IMR-90 (cell line): ENCODE measurements at regions of chr16 and their contacts with region 1.

Region 1: GRCh38 chr16:28277537-28278388 is 14.6 kb upstream of the SBK1 start:
- DNase-seq: peak; percentile 63
- ATAC-seq: peak; percentile 97
- H3K4me3 ChIP-seq: peak overlapping the region; percentile 50
- H3K27ac ChIP-seq: no peak overlapping the region; the same call in 1 of the 2 replicates
- H3K4me1 ChIP-seq: no peaks in the 10 kb centered on the region
- H3K27me3 ChIP-seq: peaks cover 26% of the 10 kb centered on the region; the same call in 1 of the 2 replicates
- CTCF ChIP-seq: peak; percentile 94
- POLR2A ChIP-seq: 0 out of 2 replicates have a peak, but pooled peaks have one; percentile 26
- RAD21 ChIP-seq: peak; percentile 94

Region 2: DNA sequence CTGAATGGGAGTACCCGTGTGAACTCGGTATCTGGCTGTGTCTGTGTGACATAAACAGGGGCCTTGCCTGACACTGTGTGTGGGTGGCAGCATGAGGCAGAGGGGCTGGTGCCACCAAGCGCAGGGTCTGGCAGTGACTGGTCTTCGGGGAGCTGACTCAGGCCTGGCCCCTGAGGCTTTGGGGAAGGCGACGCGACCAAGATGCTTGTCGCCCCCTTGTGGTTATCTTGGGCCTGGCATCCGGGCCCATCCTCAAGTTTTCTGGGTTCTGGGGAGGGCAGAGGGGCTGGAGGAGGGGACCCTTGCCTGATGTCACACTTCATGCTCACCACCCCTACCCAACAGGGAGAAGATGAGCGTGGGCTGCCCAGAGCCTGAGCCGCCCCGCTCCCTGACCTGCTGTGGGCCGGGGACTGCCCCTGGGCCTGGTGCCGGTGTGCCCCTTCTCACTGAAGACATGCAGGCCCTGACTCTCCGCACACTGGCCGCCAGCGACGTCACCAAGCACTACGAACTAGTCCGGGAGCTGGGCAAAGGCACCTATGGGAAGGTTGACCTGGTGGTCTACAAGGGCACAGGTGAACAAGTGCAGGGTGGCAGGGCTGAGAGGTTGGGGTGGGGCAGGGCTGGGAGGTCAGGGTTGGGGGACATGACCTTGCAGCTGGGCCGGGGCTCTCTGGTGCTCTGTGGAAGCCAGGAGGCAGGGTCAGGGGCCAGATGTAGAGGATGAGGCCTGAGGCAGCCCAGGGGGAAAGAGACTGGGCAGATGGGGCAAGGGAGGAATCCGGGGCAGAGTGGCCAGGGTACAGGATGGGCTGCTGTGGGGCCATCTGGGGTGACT is 39.5 kb after region 1 on chr16:
- CTCF ChIA-PET with region 1: interaction called, 7 read pairs
- POLR2A ChIA-PET with region 1: interaction called, 8 read pairs
- dilution Hi-C with region 1: no loop called
- in situ Hi-C with region 1: loop called (anchors 5 kb)
- intact Hi-C with region 1: loop called (anchors 1 kb)
- DNase-seq: peak; percentile 34
- ATAC-seq: peak; percentile 82
- H3K4me3 ChIP-seq: no peak overlapping the region
- H3K27ac ChIP-seq: no peak overlapping the region
- H3K4me1 ChIP-seq: no peaks in the 10 kb centered on the region
- H3K27me3 ChIP-seq: peaks cover 2% of the 10 kb centered on the region; the same call in 1 of the 2 replicates
- CTCF ChIP-seq: peak; percentile 81
- POLR2A ChIP-seq: no peak
- RAD21 ChIP-seq: peak; percentile 70

Region 3: DNA sequence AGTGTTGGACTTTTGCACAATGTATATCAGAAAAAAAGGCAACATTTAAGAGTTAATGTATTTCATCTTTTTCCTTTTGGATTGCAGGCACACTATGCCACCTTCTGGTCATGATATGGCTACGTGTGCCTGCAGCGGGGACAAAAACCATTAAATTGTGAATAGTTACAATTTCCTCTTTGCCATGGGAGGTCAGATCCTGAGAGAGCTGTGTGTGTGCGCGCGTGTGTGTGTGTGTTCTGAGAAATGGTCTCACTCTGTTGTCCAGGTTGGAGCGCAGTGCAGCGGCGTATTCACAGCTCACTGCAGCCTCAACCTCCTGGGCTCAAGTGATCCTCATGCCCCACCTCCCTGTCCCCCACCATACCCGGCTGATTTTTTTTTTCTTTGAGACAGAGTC is 271.6 kb after region 1 on chr16:
- CTCF ChIA-PET with region 1: interaction called, 3 read pairs
- POLR2A ChIA-PET with region 1: no interaction called
- dilution Hi-C with region 1: no loop called
- in situ Hi-C with region 1: no loop called
- intact Hi-C with region 1: loop called (anchors 2 kb)
- DNase-seq: peak; percentile 53
- ATAC-seq: peak; percentile 15; the same call in 1 of the 2 replicates
- H3K4me3 ChIP-seq: no peak overlapping the region
- H3K27ac ChIP-seq: no peak overlapping the region
- H3K4me1 ChIP-seq: 0 out of 2 replicates have a peak, but pooled peaks cover under 1% of the 10 kb centered on the region
- H3K27me3 ChIP-seq: peaks cover 7% of the 10 kb centered on the region
- CTCF ChIP-seq: peak; percentile 72
- POLR2A ChIP-seq: no peak
- RAD21 ChIP-seq: peak; percentile 77

Region 4: DNA sequence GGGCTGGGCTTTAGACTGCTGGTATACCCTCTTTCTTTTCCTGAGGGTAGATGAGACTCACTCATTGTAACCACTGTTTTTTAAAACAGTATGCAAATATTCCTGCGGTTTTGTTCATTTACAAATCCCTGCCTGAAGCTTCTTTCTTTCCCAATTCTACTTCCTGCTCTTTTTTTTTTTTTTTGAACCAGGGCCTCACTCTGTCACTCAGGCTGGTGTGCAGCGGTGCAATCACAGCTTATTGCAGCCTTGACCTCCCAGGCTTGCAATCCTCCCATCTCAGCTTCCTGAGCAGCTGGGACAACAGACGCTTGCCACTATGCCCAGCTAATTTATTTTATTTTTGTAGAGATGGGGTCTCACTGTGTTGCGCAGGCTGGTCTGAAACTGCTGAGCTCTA is 340.1 kb after region 1 on chr16:
- CTCF ChIA-PET with region 1: no interaction called
- POLR2A ChIA-PET with region 1: no interaction called
- dilution Hi-C with region 1: no loop called
- in situ Hi-C with region 1: loop called (anchors 10 kb)
- intact Hi-C with region 1: loop called (anchors 5 kb)
- DNase-seq: no peak
- ATAC-seq: no peak
- H3K4me3 ChIP-seq: no peak overlapping the region
- H3K27ac ChIP-seq: no peak overlapping the region
- H3K4me1 ChIP-seq: no peaks in the 10 kb centered on the region
- H3K27me3 ChIP-seq: peaks cover 14% of the 10 kb centered on the region; the same call in 1 of the 2 replicates
- CTCF ChIP-seq: no peak
- POLR2A ChIP-seq: no peak
- RAD21 ChIP-seq: no peak